Tibial artery (tissue), 4 donors: ENCODE measurements at regions of chr1 and their contacts with region 1.

Region 1: DNA sequence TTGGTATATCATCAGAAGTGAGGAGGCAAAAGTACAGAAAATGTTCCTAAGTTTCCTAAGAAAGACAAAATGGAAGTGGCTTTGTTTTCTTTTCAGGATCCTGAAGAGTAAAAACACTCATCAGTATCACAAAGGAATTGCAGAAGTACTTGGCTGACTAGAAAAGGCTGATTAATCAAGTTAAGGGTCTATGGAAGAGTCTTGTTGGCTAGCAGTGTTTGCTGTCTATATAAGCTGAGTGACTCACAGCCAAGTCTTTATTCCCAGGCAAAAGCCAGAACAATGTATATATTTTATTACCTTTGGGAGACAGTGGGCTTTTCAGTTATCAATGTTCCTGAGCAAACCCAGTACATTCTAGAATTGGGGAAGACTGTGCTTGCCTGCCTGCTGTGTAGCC is 777.0 kb downstream of the PLA2G4A start:
- DNase-seq: no peak
- H3K4me3 ChIP-seq: no peak overlapping the region
- H3K27ac ChIP-seq: no peak overlapping the region
- H3K4me1 ChIP-seq: no peaks in the 10 kb centered on the region
- H3K27me3 ChIP-seq: no peaks in the 10 kb centered on the region
- CTCF ChIP-seq: no peak

Region 2: DNA sequence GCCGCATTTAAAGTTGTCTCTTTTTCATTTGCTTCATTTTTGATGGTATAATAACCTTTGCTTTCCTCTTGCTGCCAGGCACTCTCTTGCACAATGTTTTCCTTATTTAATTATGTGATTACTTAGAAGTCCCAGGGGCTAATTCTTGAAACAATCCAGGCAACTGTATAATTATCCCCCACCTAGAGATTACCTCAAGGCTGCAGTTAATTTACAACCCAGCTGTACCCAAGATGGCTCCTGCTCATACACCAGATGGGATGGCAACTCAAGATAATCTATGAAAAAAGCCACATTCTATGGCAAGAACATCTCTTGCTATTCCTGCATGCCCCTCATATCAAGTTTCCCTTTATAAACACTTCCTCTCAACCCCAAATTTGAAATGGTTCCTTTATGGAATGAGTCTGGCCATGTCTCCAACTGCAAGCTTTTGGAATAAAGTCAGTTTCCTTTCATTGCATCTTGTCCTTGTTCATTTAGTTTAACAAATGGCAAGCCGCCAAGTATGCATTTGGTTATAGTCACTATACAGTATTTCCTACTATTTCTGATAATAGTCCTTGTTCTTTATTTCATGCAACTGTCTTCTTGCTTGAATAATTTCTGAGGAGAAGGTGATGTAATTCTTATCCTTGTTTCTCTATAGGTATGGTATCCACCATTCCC is 265.6 kb after region 1 on chr1:
- intact Hi-C with region 1: loop called (anchors 5 kb)
- DNase-seq: no peak
- H3K4me3 ChIP-seq: no peak overlapping the region
- H3K27ac ChIP-seq: no peak overlapping the region
- H3K4me1 ChIP-seq: no peaks in the 10 kb centered on the region
- H3K27me3 ChIP-seq: no peaks in the 10 kb centered on the region
- CTCF ChIP-seq: no peak